Caco-2 (cell line): ENCODE measurements at regions of chr4 and their contacts with region 1.

Region 1: GRCh38 chr4:80335554-80336358 is at the start of gene CFAP299:
- DNase-seq: peak; percentile 85 to 88
- H3K4me3 ChIP-seq: peak within 1 kb of the TSS; percentile 74
- H3K4me3 Mint-ChIP-seq: peak within 1 kb of the TSS; percentile 78
- H3K27ac Mint-ChIP-seq: no peak within 1 kb of the TSS
- H3K4me1 ChIP-seq: peaks cover 4% of the 10 kb centered on the region
- H3K4me1 Mint-ChIP-seq: no peaks in the 10 kb centered on the region
- H3K27me3 ChIP-seq: no peaks in the 10 kb centered on the region; the same call in 1 of the 2 replicates
- H3K27me3 Mint-ChIP-seq: no peaks in the 10 kb centered on the region
- CTCF ChIP-seq: peak; percentile 53 to 72
- total RNA-seq, gene CFAP299: not detected in 2 replicates

Region 2: DNA sequence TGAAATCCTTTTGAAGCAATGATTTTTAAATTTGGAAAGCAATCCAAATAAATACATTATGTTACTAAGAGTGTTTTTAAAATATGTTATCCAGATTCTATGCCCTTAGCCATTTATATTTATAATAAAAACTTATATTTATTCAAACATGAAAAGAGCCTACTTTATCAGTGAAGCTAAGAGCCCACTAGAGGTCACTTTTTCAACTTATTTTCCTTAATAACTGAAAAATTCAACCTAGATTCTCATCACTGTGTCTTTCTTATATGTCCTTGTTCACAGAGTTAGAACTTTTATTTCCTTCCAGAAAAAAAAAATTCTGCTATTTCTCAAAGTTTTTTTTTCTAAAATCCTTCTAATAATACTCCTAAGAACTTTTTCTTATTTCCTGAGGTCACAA is 114.6 kb before region 1 on chr4:
- CTCF ChIA-PET with region 1: no interaction called
- POLR2A ChIA-PET with region 1: no interaction called
- intact Hi-C with region 1: loop called (anchors 2 kb)
- DNase-seq: no peak
- H3K4me3 ChIP-seq: no peak overlapping the region
- H3K4me3 Mint-ChIP-seq: no peak overlapping the region
- H3K27ac Mint-ChIP-seq: no peak overlapping the region
- H3K4me1 ChIP-seq: no peaks in the 10 kb centered on the region
- H3K4me1 Mint-ChIP-seq: no peaks in the 10 kb centered on the region
- H3K27me3 ChIP-seq: no peaks in the 10 kb centered on the region
- H3K27me3 Mint-ChIP-seq: peaks cover 3% of the 10 kb centered on the region
- CTCF ChIP-seq: peak; percentile 9 to 11

Region 3: DNA sequence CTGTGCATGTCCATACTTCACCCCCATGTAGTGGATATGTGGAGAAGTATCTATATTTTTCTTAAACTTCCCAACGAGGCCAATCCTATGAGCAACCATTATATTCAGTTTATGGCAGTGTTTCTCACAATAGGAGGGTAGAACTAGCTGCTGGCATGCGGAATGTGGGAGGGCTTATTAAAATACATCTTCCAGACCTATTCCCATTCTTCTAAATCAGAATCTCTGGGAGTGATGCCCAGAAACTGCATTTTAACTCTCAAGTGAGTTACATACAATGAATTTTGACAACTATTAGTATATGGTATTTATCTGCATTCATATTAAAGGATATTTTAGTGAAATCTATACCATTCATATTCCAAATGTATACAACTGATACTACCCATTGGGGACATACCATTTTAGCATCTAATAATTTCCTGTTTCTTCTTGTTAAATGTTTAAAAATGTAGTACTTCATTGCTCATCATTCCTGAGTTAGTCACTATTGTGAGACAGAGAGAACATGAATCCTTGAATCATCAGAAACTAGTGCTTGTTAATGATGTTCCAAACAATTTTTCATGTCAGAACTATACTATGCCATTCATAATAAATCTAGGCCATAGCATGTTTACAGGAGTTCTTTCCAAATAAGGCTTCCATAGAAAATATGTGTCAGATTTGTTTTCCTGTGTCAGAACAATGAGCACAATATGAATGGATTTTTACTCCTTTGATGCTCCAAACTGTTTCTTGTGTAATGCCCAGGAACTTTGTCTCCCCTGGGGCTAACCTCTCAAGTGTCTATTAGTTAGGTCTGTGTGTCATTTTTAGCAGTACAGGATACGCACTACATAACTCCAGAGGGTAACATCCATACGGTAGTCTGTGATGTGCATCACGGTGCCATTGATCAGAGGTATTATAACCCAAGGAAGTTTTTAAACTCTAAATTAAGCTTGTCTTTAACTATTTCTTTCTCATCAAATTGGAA is 495.9 kb after region 1 on chr4:
- CTCF ChIA-PET with region 1: no interaction called
- POLR2A ChIA-PET with region 1: no interaction called
- intact Hi-C with region 1: no loop called
- DNase-seq: no peak
- H3K4me3 ChIP-seq: no peak overlapping the region
- H3K4me3 Mint-ChIP-seq: no peak overlapping the region
- H3K27ac Mint-ChIP-seq: no peak overlapping the region
- H3K4me1 ChIP-seq: no peaks in the 10 kb centered on the region
- H3K4me1 Mint-ChIP-seq: no peaks in the 10 kb centered on the region
- H3K27me3 ChIP-seq: no peaks in the 10 kb centered on the region
- H3K27me3 Mint-ChIP-seq: no peaks in the 10 kb centered on the region
- CTCF ChIP-seq: no peak